Left ventricle myocardium inferior (tissue), 1 donor: ENCODE measurements at regions of chr6 and their contacts with region 1.

Region 1: DNA sequence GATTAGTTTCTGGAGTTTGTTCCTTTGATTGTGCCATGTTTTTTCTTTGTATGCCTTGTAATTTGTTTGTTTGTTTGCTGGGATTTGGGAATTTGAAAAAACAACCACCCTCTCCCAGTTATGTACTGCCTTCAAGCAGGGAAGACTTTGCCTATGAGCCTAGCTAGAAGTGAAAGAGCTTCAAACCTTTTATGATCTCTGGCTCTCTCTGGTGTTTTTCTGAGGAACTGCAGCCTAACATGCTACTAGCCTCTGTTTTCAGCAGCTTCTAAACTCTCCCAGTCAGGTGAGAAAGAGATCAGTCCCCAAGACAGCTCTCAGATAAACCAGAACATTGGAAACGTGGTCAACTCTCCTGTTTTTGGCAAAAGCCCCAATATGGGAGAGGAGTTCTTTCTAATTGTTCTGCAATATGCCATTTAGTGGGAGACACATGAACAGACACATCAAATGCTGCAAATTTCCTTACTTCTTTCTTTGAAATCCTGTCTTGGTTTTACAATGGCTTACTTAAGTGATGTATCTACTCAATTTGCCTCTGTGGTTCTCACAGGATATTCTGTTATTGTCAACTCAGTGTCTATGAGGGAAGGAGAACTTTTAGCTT is 58.9 kb upstream of the SERINC1 start:
- DNase-seq: no peak
- H3K4me3 ChIP-seq: no peak overlapping the region
- H3K27ac ChIP-seq: no peak overlapping the region
- H3K4me1 ChIP-seq: no peaks in the 10 kb centered on the region
- H3K27me3 ChIP-seq: peaks cover 35% of the 10 kb centered on the region
- CTCF ChIP-seq: peak; percentile 94

Region 2: GRCh38 chr6:122381497-122382265 is 148.9 kb before region 1 on chr6:
- intact Hi-C with region 1: loop called (anchors 5 kb)
- DNase-seq: peak; percentile 20
- H3K4me3 ChIP-seq: no peak overlapping the region
- H3K27ac ChIP-seq: no peak overlapping the region
- H3K4me1 ChIP-seq: no peaks in the 10 kb centered on the region
- H3K27me3 ChIP-seq: peaks cover 5% of the 10 kb centered on the region
- CTCF ChIP-seq: peak; percentile 83

Region 3: DNA sequence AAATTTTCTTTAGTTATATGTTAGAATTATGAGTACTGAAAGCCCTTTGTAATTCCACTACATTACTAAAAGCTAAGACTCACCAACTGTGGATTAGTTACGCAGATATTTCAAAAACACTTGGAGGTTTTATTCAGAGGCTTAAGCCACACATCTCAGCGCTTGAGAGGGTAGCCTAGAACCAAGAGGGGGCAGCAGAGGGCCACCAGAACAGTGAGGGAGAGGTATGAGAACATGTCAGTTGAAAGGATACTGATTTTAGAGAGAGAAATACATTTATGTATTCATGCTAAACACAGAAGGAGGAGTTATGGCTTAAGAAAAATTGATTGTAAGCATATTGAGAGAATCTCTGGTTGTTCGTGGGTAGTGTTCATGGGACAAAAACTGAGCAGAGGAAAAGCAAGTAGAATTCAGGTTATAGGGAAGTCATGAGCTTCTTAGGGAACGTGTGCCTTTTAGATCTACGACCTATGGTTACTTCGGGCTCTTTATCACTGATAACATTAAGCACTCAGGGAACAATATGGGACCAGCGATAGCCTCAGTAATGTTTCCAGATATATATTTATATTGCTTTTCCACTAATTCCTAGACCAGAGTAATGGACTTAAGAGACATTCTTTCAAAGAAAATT is 38.5 kb before region 1 on chr6:
- intact Hi-C with region 1: loop called (anchors 5 kb)
- DNase-seq: peak; percentile 42
- H3K4me3 ChIP-seq: no peak overlapping the region
- H3K27ac ChIP-seq: no peak overlapping the region
- H3K4me1 ChIP-seq: peaks cover 2% of the 10 kb centered on the region
- H3K27me3 ChIP-seq: no peaks in the 10 kb centered on the region
- CTCF ChIP-seq: peak; percentile 92